Right ventricle myocardium inferior (tissue), 1 donor: ENCODE measurements at regions of chr11 and their contacts with region 1.

Region 1: DNA sequence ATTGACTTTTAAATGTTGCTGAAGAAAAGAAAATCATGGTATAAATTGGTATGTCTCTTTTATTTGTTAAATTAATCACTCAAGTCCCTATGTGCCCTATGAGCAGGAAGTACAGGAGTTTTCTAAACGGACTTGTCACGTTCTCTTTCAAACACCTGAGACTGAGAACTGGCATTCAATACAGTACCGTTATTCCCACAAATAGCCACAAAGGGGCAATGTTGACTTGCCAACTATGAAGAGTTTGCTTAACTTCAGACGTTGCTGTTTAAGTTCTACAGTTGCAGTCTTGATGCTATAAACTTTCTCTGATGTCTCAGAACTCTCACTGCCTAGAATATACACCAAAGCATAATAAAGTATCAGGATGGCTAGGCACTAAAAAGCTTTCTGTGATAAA is 7.6 kb downstream of the OR56A1 start:
- DNase-seq: no peak
- ATAC-seq: peak; percentile 69

Region 2: GRCh38 chr11:6251120-6251733 is 228.3 kb after region 1 on chr11:
- intact Hi-C with region 1: loop called (anchors 5 kb)
- DNase-seq: peak; percentile 79
- ATAC-seq: peak; percentile 82

Region 3: DNA sequence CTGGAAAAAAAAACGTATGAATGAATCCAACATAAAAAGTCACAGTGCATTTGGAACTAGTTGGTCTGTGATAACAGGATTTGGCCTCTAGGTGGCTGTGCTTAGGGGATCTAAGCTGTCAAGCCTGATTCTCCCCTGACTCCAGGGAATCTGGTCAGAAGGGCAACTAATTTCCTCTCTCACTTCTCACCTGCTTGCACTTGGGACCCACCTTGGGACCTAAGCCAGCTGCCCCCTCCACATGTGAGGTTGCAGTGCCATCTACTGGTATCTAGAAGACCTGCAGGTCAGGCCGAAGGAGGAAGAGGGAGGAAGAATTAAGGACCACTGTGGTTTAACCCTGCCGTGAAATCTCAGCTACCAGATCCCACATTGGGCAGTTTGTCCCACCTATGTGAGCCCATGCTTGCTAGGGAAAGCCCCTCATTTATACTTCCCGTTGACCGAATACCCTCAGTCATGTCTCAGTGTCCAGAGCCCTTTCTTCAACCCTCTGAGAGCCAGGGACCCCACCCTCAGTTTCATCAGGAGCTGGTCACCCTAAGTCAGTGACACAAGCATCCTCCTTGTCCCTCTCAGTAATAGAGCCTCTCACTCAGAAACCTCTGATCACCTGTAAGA is 330.5 kb after region 1 on chr11:
- intact Hi-C with region 1: loop called (anchors 2 kb)
- DNase-seq: peak; percentile 74
- ATAC-seq: peak; percentile 59

Region 4: GRCh38 chr11:6362873-6363678 is 340.1 kb after region 1 on chr11:
- intact Hi-C with region 1: loop called (anchors 1 kb)
- DNase-seq: peak; percentile 85
- ATAC-seq: peak; percentile 92